ENCODE measurements at regions of chr2 and their contacts with region 1.

Region 1: GRCh38 chr2:3443506-3444073 is 64.1 kb downstream of the TRAPPC12 start:
- DNase-seq: no peak
- H3K4me3 Mint-ChIP-seq: no peak overlapping the region
- H3K27ac Mint-ChIP-seq: no peak overlapping the region
- H3K4me1 Mint-ChIP-seq: peaks cover 2% of the 10 kb centered on the region
- H3K27me3 Mint-ChIP-seq: no peaks in the 10 kb centered on the region

Region 2: DNA sequence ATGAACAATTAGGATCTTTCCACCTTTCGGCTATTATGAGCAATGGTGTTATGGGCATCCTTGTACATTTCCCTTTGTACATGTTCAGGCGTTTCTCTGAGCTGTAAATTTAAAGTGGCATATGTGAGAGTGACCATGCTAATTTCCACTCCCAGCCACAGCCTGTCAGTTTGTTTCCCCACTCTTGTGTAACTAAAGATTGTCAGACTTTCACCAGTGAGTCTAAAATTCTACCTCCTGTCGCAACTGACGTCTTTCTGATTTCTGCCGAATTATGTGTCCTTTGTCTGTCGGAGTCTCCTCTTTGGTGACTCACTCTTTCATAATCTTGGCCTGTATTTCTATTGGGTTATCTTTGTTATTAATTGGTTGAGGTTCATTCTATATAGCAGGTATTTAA is 13.4 kb before region 1 on chr2:
- CTCF ChIA-PET with region 1: no interaction called
- DNase-seq: no peak
- H3K4me3 Mint-ChIP-seq: no peak overlapping the region
- H3K27ac Mint-ChIP-seq: no peak overlapping the region
- H3K4me1 Mint-ChIP-seq: no peaks in the 10 kb centered on the region
- H3K27me3 Mint-ChIP-seq: no peaks in the 10 kb centered on the region

Region 3: DNA sequence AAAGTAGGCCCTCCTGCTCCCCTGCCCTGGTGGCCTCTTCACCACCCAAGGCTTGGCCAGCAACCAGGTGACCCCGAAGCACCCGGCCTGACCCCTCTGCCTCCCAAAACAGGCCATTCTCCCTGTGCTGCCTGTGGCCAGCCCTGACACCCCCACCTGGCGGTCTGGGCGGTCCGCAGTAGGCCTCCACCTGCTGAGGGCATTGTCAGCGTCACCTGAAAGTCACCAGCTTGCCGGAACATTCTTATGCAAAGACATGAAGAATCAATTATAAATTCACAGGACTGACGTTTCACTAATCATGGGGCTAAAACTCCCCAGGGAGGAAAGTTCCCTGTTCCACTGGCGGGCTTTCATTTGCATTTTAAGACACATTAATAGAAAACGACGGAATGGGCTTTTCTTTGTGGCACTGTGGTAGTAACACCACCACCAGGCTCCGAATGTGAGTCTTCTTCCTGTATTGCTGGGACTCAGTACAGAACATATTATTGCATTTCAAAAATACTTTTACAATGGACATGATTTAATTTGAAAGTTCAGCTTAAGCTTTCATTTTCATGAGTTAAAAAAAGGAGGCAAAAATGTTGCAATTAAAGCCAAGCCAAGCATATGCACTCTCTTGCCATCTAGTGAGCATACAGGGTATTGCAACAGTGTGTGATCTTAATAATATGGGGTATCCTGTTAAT is 18.4 kb after region 1 on chr2:
- CTCF ChIA-PET with region 1: interaction called, 10 read pairs
- DNase-seq: peak; percentile 51
- H3K4me3 Mint-ChIP-seq: no peak overlapping the region
- H3K27ac Mint-ChIP-seq: peak overlapping the region; percentile 60
- H3K4me1 Mint-ChIP-seq: peaks cover 14% of the 10 kb centered on the region
- H3K27me3 Mint-ChIP-seq: no peaks in the 10 kb centered on the region

Region 4: DNA sequence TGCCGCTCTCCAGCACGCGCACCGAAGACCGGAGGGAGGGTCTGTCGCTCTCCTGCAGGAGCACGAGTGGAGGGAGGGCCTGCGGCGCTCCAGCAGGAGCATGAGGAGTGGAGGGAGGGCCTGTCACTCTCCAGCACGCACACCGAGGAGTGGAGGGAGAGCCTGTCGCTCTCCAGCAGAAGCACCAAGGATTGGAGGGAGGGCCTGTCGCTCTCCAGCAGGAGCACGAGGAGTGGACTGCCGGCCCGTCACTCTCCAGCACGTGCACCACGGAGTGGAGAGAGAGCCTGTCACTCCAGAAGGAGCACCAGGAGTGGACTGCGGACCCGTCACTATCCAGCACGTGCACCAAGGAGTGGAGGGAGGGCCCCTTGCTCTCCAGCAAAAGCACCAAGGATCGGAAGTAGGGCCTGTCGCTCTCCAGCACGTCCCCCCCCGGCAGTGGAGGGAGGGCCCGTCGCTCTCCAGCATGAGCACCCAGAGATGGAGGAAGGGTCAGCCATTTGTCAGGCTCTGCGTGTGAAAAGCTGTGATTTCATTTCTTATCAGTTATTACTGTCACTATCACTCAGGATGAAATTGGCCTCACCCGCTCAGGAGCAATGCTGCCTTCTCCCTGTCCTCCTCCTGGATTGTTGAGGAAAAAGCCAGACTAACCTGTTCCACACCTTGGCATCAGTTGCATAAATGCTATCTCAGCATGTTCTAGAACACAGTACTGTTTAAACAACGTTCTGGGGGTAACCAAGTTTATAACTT is 39.8 kb after region 1 on chr2:
- CTCF ChIA-PET with region 1: no interaction called
- DNase-seq: no peak
- H3K4me3 Mint-ChIP-seq: no peak overlapping the region
- H3K27ac Mint-ChIP-seq: no peak overlapping the region
- H3K4me1 Mint-ChIP-seq: no peaks in the 10 kb centered on the region
- H3K27me3 Mint-ChIP-seq: no peaks in the 10 kb centered on the region

Measured in activated naive CD4-positive, alpha-beta T cell treated with anti-CD3 and anti-CD28 coated beads, Interleukin-2, amount 10 ng/mL, durations not matched to agents 7 days and 5 days (primary cell).